Heart left ventricle (tissue), 16 donors: ENCODE measurements at regions of chr9 and their contacts with region 1.

Region 1: DNA sequence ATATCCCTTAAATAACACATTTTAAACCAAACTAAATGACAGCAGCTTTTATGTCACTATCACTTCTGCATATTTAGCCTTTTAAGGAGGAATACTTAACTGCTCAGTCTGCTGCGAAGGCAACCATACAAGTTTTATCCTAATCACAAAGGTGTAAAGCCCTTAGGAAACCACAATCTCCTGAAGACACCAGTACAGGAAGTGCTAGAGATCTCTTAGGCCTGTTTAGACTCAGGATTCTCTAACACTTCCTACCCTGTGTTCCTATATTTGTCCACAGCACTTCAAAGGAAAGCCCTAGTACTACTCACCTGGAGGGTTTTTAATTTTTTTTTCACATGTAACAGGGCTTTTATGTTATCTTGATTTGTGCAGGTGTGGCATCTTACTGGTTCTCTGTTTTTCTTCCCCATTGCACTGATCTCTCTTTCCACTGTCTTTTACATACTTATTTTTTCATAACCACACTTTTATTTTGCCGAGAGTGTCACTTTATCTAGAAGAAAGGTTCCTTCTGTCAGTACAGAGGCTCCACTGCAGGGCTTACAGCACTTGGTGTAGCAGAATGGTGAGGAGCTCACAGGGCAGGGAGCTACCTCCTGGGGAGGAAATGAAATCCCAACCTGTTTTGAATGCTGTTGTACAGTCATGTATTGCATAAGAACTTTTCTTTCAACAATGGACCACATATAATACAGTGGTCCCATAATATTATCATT is 1060.6 kb upstream of the ACO1 start:
- DNase-seq: no peak
- ATAC-seq: no peak
- H3K4me3 ChIP-seq: no peak overlapping the region
- H3K27ac ChIP-seq: peak overlapping the region in 1 of 12 donors; percentile 59
- H3K4me1 ChIP-seq: no peaks in the 10 kb centered on the region
- H3K27me3 ChIP-seq: no peaks in the 10 kb centered on the region
- CTCF ChIP-seq: no peak
- POLR2A ChIP-seq: no peak

Region 2: GRCh38 chr9:31389075-31389474 is 65.2 kb after region 1 on chr9:
- intact Hi-C with region 1: loop called in 1 of 10 experiments (anchors 10 kb)
- DNase-seq: no peak
- ATAC-seq: no peak
- H3K4me3 ChIP-seq: no peak overlapping the region
- H3K27ac ChIP-seq: no peak overlapping the region
- H3K4me1 ChIP-seq: peaks cover 0 to 11% (median 2%) of the 10 kb centered on the region in 12 donors
- H3K27me3 ChIP-seq: no peaks in the 10 kb centered on the region
- CTCF ChIP-seq: no peak
- POLR2A ChIP-seq: no peak